AG04449 (cell line): ENCODE measurements at regions of chr17 and their contacts with region 1.

Region 1: GRCh38 chr17:3738562-3739295 is 15.0 kb downstream of the HASPIN start:
- DNase-seq: no peak
- H3K4me3 ChIP-seq: no peak overlapping the region
- CTCF ChIP-seq: no peak

Region 2: DNA sequence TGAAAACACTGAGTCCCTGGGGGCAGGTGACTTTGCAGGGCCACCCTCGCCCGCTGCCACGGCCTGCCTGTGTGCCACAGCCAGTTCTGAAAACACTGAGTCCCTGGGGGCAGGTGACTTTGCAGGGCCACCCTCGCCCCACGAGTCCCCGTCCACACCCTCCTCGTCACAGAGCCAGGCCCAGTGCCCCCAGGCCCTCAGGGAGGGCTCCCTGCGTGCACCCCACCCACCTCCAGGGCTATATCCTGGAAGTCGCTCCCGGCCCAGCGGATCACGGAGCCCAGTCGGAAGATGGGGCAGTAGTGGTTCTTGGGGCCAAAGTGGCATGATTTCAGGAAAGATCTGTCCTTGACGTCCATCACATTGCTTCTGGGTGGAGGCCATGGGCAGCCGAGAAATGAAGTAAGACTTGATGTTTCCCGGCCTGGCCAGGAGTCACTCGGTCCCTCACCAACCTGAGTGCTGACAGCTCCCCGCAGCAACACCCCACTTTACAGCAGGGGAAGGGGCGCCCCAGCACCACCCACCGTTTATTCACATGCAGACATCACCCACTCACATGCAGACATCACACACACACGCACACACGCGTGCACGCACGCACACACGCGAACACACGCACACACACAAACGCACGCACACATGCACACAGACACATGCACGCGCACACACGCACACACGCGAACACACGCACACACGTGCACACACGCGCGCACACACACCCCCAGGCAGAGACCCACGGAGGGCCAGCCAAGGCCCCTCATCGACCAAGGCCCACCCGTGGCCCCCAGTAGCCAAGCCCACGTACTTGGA is 49.3 kb before region 1 on chr17:
- CTCF ChIA-PET with region 1: no interaction called
- POLR2A ChIA-PET with region 1: no interaction called
- DNase-seq: no peak
- H3K4me3 ChIP-seq: no peak overlapping the region
- CTCF ChIP-seq: no peak

Region 3: GRCh38 chr17:3723556-3724369 is 15.0 kb before region 1 on chr17 and contains the start of gene HASPIN:
- CTCF ChIA-PET with region 1: interaction called, 88 read pairs
- POLR2A ChIA-PET with region 1: interaction called, 3 read pairs
- DNase-seq: no peak
- H3K4me3 ChIP-seq: peak within 1 kb of the TSS; percentile 87
- CTCF ChIP-seq: peak; percentile 42

Region 4: DNA sequence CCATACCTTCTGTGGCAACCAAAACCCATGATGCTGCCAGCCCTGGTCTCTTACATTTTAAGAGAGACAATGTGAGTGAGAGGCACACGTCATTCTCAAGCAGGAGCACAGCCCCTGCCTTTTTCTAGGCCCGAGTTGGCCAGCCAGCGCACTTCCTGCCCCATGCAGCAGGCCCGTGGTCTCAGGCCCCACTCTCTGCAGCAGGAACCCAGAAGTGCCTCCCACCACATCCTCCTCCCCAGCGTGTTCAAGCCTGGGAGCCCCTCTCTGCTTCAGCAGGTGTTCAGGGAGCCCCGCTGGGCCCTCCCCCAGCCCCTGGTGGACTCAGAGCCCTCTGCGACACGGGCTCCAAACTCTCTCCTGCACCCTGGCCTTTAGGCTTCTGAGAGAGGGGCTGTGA is 31.7 kb after region 1 on chr17:
- CTCF ChIA-PET with region 1: interaction called, 10 read pairs
- POLR2A ChIA-PET with region 1: no interaction called
- DNase-seq: no peak
- H3K4me3 ChIP-seq: no peak overlapping the region
- CTCF ChIP-seq: no peak

Region 5: DNA sequence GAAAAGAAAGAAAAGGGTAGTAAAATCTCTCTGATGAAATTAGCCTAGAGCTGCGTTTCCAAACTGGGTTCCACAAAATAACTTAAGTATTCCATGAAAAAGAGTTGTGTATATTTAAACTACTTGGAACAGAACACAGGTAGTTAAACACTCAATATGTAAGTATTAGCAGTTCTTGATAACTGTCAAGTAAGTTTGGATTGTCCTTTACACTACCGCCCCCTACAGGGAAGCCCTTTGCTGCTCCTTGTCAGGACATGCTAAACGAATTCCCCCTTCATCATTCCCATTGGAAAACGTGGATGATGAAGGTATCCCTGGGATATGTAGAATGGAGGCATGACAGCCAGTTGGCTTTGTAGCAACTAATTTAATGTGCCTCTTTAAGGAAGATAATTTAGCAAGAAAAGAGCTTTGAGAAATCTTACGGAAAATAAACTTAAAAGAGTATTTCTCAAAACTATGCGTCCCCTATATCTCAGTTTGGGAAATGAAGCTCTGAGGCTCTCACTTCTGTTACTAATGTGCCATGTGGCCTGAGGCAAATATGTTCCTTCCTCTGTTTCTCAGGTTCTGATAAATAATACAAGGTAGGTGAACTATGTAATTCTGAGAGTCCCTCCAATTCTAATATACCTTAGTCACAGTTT is 88.5 kb after region 1 on chr17:
- CTCF ChIA-PET with region 1: interaction called, 500 read pairs
- POLR2A ChIA-PET with region 1: interaction called, 6 read pairs
- DNase-seq: no peak
- H3K4me3 ChIP-seq: no peak overlapping the region
- CTCF ChIP-seq: peak; percentile 66

Region 6: DNA sequence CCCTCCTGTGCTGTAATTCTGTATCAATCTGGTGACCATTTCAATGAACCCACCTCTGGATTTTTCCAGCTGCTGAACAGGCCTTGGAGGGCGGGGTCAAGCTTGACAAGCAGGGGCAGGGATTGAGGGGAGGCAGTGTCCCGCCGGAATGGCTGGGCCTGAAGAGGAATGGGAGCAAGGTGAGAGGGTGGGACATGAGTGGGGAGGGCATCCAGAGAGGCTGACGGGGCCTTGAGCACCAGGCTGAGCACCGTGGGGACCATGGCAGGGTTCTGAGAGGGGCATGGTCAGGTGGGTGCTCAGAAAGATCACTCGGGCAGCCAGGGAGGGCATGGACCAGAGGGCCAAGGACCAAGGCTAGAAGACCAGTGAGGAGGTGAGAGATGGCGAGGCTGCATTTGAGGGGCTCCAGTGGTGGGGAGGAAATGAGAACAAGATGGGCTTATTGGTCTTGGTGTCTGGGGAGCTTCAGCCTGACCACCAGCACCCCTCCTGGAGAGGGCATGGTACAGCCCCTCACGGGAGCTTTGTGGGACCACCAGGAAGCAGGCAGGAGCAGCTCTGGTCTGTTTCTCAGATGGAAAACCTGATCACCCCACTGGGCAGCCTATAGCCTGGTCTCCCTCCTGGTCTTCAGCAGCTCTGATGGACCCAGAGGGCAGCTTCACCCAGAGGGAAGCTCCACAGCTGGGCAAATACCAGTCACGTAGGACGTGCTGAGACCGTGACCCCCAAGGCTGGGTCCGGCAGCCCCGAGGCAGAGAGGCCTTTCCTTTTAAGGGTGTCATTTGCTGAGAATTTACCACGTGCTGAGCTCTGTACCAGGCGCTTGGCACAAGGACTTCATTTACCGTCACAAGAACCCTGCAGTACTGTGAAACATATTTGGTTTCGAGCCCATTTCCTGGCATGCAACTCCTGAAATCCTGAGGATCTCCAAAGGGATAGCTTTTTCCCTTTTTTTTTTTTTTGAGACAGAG is 118.7 kb after region 1 on chr17:
- CTCF ChIA-PET with region 1: interaction called, 30 read pairs
- POLR2A ChIA-PET with region 1: no interaction called
- DNase-seq: no peak
- H3K4me3 ChIP-seq: no peak overlapping the region
- CTCF ChIP-seq: no peak

Region 7: DNA sequence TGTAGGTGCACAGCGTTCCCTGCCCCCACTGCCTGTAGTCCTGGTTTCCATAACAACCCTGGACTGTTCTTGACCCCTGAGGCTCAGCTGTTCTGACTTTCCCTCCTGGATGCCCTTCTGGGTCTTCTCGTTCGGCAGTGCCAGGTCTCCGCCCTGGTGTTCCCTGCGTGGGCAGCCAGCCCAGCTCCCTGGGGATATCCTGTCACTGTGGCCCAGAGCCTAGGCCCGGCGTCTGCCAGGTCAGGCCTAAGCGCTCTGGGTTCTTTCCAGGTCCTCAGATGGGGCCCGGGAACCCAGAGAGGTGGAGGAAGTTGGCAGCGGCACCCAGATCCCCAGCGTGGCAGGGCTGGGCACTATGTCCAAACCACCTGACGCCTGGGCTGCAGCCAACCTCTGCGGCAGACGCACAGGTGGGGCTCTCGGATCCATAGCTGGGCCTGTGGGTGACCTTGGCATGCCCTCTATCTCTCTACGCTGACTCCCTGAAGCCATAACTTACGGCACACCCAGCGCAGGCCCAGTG is 238.0 kb after region 1 on chr17:
- CTCF ChIA-PET with region 1: no interaction called
- POLR2A ChIA-PET with region 1: no interaction called
- DNase-seq: no peak
- H3K4me3 ChIP-seq: no peak overlapping the region
- CTCF ChIP-seq: no peak

Region 8: GRCh38 chr17:4004517-4005295 is 266.0 kb after region 1 on chr17:
- CTCF ChIA-PET with region 1: interaction called, 35 read pairs
- POLR2A ChIA-PET with region 1: no interaction called
- DNase-seq: no peak
- H3K4me3 ChIP-seq: no peak overlapping the region
- CTCF ChIP-seq: peak; percentile 81